Activated CD8-positive, alpha-beta T cell treated with anti-CD3 and anti-CD28 coated beads for 36 hours (primary cell): ENCODE measurements at regions of chr3 and their contacts with region 1.

Region 1: DNA sequence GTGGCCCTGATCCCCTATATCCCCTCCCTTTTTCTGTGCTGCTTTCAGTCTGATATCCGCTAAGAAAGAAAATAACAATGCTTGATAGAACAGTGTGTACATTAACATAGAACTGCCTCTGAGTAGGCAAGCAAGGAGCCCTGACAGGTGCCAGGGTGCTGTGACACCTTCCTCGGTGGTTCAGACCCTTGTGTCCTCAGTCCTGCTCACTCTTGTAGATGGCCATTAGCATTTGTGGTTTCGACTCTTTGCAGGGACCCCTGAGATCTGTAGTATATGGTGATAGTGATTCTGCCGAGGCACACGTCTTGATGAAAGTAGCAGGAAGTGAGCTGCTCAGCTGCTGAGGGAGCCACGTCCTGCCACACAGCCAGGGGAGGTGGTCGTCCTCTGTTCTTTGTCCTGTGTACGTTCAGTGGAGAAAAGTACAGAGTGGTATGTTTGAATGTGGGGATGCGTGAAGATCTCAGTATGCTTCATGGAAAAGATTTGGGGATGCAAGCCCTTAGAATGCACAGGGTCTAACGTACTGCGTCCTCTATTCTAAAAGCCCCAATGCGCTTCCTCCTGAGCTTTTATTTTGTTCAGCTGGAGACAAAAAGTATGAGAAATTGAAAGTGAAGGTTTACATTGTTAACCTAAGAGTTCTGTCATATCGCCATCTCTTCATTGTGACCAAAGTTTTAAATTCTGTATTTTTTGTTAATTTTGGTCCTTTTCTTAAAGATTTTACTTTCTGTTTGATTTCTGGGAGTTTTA is 35.4 kb downstream of the PXYLP1 start:
- DNase-seq: peak; percentile 65
- ATAC-seq: peak; percentile 84
- H3K4me3 Mint-ChIP-seq: peak overlapping the region; percentile 74
- H3K27ac Mint-ChIP-seq: peak overlapping the region; percentile 95
- H3K4me1 Mint-ChIP-seq: peaks cover 29% of the 10 kb centered on the region
- H3K27me3 Mint-ChIP-seq: no peaks in the 10 kb centered on the region
- CTCF ChIP-seq: no peak

Region 2: DNA sequence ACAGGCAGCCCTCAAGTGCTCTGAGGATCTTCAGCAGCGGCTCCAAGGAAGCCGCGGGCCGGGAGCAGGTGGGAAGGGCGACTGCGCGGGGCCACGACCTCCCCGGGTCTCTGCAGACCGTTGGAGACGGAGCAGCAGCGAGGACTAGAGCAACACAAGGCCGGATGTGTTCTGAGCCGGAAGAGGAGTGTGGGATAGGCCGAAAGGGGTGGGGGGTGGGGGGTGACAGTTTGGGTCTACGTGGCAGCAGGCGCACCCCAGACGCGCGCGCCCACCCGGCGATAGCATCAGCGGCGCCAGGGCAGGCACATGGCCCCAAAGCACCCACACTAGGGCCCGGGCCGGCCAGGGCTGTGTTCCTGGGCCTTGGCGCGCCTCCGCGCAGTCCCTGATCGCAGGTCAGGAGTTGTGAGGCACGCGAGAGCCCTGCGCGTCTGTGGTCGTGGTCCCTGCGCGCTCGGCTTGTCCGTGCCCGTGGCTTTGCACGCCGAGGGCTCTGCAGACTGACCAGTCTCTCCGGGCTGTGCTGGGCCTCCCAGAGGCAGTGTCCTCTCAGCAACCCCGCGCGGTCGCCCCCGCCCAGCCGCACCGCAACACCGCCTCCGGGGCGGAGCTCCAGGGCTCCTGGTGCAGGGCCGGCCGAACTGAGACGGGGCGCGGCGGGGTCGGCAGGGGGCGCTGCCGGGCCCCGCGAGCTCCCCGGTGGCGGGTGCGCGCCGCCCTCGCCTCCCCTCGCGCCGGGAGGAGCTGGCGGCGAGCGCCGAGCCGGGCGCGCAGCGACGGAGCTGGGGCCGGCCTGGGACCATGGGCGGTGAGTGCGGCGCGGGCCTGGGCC is 35.7 kb before region 1 on chr3 and contains the start of gene PXYLP1:
- CTCF ChIA-PET with region 1: interaction called, 52 read pairs
- POLR2A ChIA-PET with region 1: interaction called, 35 read pairs
- intact Hi-C with region 1: no loop called
- DNase-seq: peak; percentile 94
- ATAC-seq: peak; percentile 91
- H3K4me3 Mint-ChIP-seq: peak within 1 kb of the TSS; percentile 99
- H3K27ac Mint-ChIP-seq: peak within 1 kb of the TSS; percentile 99
- H3K4me1 Mint-ChIP-seq: peaks cover 45% of the 10 kb centered on the region
- H3K27me3 Mint-ChIP-seq: no peaks in the 10 kb centered on the region
- CTCF ChIP-seq: peak; percentile 59
- total RNA-seq, gene PXYLP1: 14.9 to 17.2 TPM

Region 3: DNA sequence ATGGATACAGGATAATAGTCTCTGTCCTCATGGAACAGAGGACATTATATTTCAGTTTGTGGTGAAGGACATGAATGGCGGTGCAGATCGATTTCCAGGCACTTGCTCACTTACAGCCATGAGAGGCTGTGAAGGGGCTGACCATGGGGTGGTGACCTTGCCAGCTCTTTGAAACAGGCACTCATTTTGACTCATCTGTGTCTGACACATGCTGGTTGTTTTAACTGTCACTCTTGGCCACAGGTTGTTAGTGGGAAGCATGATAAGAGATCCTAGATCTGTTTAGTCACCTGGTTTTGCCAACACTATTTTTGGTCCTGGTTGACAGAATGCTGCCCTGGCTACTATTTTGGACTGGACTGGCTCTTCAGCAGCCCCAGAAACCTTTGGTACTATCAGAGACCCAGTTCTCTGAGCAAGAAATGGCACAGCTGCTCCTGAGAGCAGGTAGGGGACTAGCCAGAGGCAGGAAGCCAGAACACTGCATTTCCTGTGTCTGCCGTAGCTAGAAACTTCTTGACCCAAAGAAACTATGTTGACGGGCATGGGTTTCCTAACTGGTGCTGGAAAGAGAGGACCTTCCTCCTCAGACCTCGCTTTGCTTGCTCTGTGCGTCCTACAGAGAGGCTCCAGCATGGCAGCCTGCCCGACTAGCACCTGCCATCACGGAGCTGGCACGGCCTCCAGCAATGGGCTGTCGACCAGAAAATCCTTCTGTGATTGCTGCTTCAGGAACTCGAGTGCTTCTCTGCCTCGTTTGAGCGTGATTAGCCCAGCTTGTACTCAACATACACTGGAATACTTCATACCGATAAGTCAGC is 29.1 kb before region 1 on chr3:
- CTCF ChIA-PET with region 1: interaction called, 52 read pairs
- POLR2A ChIA-PET with region 1: interaction called, 35 read pairs
- intact Hi-C with region 1: no loop called
- DNase-seq: peak; percentile 64
- ATAC-seq: peak; percentile 86
- H3K4me3 Mint-ChIP-seq: no peak overlapping the region
- H3K27ac Mint-ChIP-seq: peak overlapping the region; percentile 43
- H3K4me1 Mint-ChIP-seq: peaks cover 90% of the 10 kb centered on the region
- H3K27me3 Mint-ChIP-seq: no peaks in the 10 kb centered on the region
- CTCF ChIP-seq: no peak

Region 4: DNA sequence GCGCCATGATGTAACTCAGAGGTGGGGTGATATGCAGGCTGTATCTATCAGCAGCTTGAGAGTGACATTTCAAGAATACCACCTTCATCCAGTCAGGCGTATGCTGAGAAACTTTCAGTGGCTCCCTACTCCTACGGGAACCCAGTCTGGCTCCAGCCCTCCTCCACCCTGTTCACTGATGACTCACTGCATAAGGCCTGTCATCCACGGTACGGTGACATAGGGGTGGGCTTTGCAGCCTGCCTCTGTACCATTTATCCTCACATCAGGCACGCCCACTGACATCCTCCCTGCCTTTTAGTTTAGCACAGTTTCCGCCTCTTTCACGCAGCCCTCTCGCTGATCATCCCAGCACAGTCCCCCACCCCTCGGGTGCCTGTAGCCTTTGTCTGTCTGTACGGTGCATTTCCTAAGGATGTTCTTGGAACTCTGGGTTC is 23.7 kb before region 1 on chr3:
- CTCF ChIA-PET with region 1: interaction called, 4 read pairs
- POLR2A ChIA-PET with region 1: interaction called, 10 read pairs
- intact Hi-C with region 1: no loop called
- DNase-seq: peak; percentile 93
- ATAC-seq: peak; percentile 99
- H3K4me3 Mint-ChIP-seq: peak overlapping the region; percentile 59
- H3K27ac Mint-ChIP-seq: peak overlapping the region; percentile 86
- H3K4me1 Mint-ChIP-seq: peaks cover 50% of the 10 kb centered on the region
- H3K27me3 Mint-ChIP-seq: no peaks in the 10 kb centered on the region
- CTCF ChIP-seq: no peak

Region 5: GRCh38 chr3:141255846-141256261 is 11.1 kb before region 1 on chr3:
- CTCF ChIA-PET with region 1: interaction called, 22 read pairs
- POLR2A ChIA-PET with region 1: interaction called, 10 read pairs
- intact Hi-C with region 1: no loop called
- DNase-seq: peak; percentile 70
- ATAC-seq: peak; percentile 93
- H3K4me3 Mint-ChIP-seq: no peak overlapping the region
- H3K27ac Mint-ChIP-seq: peak overlapping the region; percentile 47
- H3K4me1 Mint-ChIP-seq: peaks cover 49% of the 10 kb centered on the region
- H3K27me3 Mint-ChIP-seq: no peaks in the 10 kb centered on the region
- CTCF ChIP-seq: peak; percentile 49

Region 6: DNA sequence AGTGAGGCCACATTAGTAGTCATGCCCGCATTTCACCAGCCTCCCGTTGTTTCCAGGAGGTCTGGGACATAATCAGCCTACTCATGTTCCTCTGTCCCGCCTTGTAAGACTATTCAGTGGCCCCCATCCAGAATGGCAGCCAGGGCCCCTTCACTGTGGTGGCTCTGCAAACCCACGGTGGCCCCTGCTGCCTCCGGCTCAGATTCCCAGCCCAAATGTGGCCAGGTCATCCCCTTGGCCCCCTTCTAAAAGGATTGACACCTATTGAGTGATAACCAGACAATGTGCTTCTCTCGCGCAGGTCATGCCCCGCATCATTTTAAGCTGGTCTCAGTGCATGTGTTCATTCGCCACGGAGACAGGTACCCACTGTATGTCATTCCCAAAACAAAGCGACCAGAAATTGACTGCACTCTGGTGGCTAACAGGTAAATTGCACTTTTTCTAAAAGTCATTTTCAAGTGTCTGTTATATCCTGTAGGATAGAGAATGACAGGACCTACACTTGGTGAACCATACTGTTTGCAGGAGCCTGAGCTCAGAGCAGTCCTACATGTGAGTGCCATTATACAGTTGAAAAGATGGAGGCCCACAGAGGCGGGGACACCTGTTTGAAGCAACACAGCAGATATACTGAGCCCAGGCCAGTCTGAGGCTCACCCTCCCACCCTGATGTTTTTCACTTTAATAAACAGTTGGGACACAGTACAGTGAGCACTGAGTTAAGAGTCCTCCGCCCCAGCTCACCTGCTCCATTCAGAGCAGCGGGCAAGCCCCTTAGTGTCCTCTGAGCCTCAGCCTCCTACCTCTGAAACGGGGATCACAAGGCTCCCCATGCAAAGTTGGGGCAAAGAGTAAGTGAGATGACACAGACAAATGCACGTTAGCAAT is 12.3 kb after region 1 on chr3:
- CTCF ChIA-PET with region 1: interaction called, 11 read pairs
- POLR2A ChIA-PET with region 1: no interaction called
- intact Hi-C with region 1: no loop called
- DNase-seq: no peak
- ATAC-seq: peak; percentile 61
- H3K4me3 Mint-ChIP-seq: no peak overlapping the region
- H3K27ac Mint-ChIP-seq: no peak overlapping the region
- H3K4me1 Mint-ChIP-seq: peaks cover 21% of the 10 kb centered on the region
- H3K27me3 Mint-ChIP-seq: no peaks in the 10 kb centered on the region
- CTCF ChIP-seq: peak; percentile 75

Region 7: DNA sequence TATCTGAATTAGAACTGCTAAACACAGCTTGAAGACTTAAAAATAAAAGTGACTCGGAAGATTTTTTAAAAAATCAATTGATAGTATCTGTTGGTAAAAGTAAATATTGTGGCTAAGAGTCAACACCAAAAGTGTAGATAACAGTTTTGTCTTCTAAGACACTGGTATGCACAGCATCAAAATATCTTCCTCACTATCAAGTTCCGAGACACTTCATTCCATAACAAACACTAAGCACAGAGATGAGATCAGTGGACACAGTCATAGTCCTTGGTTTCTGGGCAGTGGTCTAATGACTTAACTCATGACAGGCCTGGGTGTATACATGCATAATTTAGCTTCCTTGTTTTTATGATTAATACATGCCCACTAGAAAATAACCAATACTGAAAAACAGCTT is 27.9 kb after region 1 on chr3:
- CTCF ChIA-PET with region 1: no interaction called
- POLR2A ChIA-PET with region 1: no interaction called
- intact Hi-C with region 1: no loop called
- DNase-seq: no peak
- ATAC-seq: peak; percentile 76
- H3K4me3 Mint-ChIP-seq: peak overlapping the region; percentile 38
- H3K27ac Mint-ChIP-seq: peak overlapping the region; percentile 63
- H3K4me1 Mint-ChIP-seq: peaks cover 15% of the 10 kb centered on the region
- H3K27me3 Mint-ChIP-seq: no peaks in the 10 kb centered on the region
- CTCF ChIP-seq: no peak

Region 8: DNA sequence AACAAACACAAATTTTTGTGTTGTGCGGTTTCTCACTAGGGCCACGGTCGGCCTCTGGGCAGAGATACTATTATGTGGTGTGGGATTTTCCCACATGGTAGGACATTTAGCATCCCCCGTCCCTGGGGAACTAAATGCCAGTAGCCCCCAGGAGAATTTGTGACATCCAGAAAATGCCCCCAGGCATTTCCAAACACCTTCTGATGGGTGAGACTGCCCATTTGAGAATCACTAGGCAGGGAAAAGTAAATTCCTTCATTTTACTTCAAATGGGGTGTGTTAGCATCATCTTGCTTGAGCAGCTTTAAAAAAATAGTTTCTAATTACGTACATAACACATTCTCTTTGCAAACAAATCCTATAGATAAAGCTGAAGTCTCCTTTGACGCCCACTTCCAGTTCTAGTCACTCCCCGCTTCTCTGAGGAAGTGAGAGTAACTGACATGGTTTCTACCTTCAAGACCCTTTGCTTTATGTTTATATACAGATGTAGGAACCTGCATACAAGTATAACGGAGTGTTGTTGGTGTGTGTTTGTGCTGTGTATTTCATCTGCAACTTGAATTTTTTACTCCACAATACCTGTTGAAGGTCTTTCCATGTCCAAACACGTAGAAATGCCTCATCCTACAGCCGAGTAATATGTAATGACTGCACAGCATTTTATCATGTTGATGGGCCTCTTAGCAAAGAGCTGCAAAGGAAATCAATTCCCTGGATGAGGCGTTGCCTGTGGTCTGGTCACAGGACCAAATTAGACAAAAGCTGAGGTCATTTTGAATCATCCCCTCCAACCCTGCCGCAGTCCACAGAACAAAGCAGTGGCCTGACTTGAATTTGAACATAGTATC is 69.9 kb after region 1 on chr3:
- CTCF ChIA-PET with region 1: no interaction called
- POLR2A ChIA-PET with region 1: no interaction called
- intact Hi-C with region 1: no loop called
- DNase-seq: no peak
- ATAC-seq: no peak
- H3K4me3 Mint-ChIP-seq: no peak overlapping the region
- H3K27ac Mint-ChIP-seq: no peak overlapping the region
- H3K4me1 Mint-ChIP-seq: no peaks in the 10 kb centered on the region
- H3K27me3 Mint-ChIP-seq: no peaks in the 10 kb centered on the region
- CTCF ChIP-seq: no peak